Right ventricle myocardium inferior (tissue), 1 donor: ENCODE measurements at regions of chr2 and their contacts with region 1.

Region 1: DNA sequence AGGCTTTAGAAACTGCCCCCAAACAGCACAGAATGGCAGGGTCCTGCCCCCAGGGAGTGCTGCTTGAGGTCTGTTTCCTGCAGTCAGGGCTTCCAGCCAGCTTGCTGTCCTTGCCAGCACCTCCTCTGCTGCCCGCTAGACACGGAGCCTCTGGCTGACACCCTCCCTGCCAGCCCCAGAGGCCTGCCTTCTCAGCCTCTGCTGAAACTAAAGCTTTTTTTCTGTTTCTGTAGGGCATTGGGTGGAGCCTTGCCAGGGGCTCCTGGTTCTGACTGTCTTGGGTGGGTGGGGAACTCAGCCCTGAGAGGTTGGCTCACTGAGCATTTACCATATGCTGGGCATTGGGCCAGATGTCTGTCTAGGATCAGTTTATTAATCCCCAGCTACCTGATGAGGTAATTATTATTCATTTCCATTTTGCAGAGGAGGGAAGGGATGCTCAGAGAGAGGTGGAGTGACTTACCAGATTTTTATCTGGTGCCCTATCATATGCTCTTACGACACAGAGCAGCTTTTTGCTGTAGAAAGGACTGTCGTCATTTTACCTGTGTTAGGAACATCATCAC is 35.4 kb downstream of the INPP4A start:
- DNase-seq: no peak
- ATAC-seq: peak; percentile 83

Region 2: DNA sequence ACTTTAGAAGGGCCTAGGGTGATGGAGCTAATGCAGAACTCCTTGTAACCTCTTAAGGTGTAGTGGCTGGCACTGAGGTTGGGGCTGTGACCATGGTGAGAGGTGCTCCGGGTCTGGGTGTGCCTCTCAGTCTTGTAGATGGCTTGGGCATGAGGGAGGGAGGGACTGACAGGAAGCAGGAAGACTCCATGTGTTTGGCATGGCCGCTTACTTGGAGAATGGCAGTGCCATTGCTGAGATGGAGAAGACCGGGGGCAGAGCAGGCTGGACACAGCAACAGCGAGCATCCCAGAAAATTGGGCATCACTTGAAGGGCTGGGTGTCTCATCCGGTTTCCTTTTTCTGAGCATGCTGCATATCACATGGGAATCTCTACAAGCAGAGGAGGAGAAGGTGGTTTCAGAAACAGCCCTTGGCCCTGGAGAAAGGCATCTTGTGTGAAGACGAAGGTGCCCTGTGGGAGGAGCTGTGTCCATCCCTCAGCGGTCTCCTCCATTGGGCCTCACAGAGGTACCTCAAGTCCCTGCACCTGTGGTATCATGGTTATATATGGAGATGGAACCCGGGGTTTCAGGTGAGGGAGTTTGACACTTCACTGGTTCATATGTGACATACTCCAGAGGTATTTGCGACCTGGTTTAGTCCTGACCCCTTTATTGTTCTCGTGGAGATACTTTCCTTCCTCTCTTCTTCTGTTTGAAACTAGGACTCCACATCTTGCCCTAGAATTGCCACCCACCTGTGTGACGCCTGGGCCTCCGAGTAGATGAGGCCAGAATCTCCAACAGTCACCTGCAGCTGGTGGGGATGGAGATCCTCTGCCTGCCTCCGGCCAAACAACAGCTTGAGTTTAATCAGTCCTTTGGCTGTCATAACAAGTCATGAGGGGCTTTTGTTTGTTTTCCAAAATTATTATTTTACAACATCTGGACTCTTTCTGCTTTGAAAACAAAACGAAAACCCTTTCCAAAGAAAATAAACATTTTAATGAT is 10.2 kb after region 1 on chr2:
- intact Hi-C with region 1: loop called (anchors 1 kb)
- DNase-seq: no peak
- ATAC-seq: no peak

Region 3: GRCh38 chr2:98795891-98796676 is 316.0 kb after region 1 on chr2:
- intact Hi-C with region 1: no loop called
- DNase-seq: no peak
- ATAC-seq: no peak